Adrenal gland (tissue), 19 donors: ENCODE measurements at regions of chr16 and their contacts with region 1.

Region 1: GRCh38 chr16:68902008-68902968 is 59.0 kb downstream of the TANGO6 start:
- DNase-seq: peak; percentile 20 to 76 (median 34)
- H3K4me3 ChIP-seq: no peak overlapping the region
- H3K27ac ChIP-seq: no peak overlapping the region
- H3K4me1 ChIP-seq: no peaks in the 10 kb centered on the region
- H3K27me3 ChIP-seq: no peaks in the 10 kb centered on the region
- CTCF ChIP-seq: peak; percentile 51 to 68 (median 60)
- POLR2A ChIP-seq: no peak

Region 2: DNA sequence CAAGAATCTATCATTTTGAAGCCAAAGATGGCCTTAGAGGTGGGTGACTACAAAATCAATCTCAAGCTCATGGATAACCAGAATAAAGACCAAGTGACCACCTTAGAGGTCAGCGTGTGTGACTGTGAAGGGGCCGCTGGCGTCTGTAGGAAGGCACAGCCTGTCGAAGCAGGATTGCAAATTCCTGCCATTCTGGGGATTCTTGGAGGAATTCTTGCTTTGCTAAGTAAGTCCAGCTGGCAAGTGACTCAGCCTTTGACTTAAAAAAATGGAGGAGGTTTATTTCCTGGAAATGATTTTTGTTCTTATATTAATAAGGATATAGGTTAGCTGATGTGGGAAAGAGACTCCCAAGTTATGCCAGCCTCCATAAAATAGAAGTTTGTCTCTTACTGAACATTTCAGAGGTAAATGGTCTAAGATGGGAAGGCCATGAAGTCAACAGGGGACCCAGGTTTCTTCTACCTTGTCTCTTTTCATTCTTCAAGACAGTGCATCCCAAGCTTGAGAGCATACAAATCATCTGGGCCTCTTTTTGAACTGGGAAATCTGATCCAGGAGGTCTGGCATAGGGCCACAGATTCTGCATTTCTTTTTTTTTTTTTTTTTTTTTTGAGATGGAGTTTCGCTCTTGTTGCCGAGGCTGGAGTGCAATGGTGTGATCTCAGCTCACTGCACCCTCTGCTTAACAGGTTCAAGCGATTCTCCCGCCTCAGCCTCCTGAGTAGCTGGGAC is 78.7 kb before region 1 on chr16:
- intact Hi-C with region 1: no loop called
- DNase-seq: no peak
- H3K4me3 ChIP-seq: no peak overlapping the region
- H3K27ac ChIP-seq: no peak overlapping the region
- H3K4me1 ChIP-seq: no peaks in the 10 kb centered on the region
- H3K27me3 ChIP-seq: no peaks in the 10 kb centered on the region
- CTCF ChIP-seq: no peak
- POLR2A ChIP-seq: no peak

Region 3: DNA sequence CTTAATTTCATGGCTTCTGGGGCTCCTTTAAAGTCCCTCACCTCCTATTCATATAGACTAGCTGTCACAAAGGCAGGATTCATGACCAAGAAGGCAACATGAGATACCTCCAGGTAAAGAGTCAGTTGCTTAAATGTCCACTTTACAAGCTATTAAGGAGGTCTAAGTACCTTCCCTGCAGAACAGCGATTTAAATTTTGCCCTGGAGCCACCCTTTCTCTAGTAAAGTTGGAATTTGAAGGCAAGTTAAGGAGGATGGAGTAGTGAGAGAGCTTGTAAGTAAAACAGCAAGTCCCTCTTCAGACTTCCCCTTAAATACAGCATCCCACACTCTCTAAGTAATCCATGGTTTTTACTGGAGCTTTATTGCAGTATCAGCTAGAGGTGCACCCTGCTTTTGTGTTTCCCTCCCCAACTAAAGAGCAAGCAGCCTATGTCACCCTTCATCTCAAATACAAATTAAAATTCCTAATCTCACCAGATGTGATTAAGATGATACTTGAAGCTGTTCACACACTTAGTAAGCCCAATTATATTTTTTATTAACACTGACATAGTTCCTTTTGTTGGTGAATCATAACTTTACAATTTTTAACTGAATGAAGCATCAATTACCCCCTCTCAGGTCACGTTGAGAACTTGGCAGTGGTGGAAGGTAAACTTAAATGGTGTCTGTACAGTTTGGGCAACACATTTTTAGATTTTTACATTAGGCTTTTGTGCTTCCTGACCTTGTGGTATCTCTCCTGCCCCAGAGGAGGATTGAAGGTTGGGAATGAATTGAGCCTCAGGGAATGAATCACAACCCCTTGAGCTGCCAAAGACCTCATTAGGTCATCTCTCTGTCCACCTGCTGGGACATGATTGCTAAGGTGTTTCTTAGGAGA is 49.9 kb after region 1 on chr16:
- intact Hi-C with region 1: no loop called
- DNase-seq: no peak
- H3K4me3 ChIP-seq: no peak overlapping the region
- H3K27ac ChIP-seq: no peak overlapping the region
- H3K4me1 ChIP-seq: no peaks in the 10 kb centered on the region
- H3K27me3 ChIP-seq: no peaks in the 10 kb centered on the region
- CTCF ChIP-seq: no peak
- POLR2A ChIP-seq: no peak

Region 4: GRCh38 chr16:69105489-69106361 is 203.4 kb after region 1 on chr16 and contains the start of gene HAS3:
- intact Hi-C with region 1: loop called in 1 of 2 experiments (anchors 10 kb)
- DNase-seq: peak in 5 of 7 donors; percentile 29 to 55 (median 38)
- H3K4me3 ChIP-seq: peak within 1 kb of the TSS in 2 of 4 donors; percentile 53 to 54
- H3K27ac ChIP-seq: no peak within 1 kb of the TSS
- H3K4me1 ChIP-seq: peaks cover 14 to 22% of the 10 kb centered on the region in 2 donors
- H3K27me3 ChIP-seq: peaks cover 8% of the 10 kb centered on the region
- CTCF ChIP-seq: no peak
- POLR2A ChIP-seq: no peak
- total RNA-seq, gene HAS3: 0.06 to 1.1 (median 0.42) TPM